ENCODE measurements at regions of chr2 and their contacts with region 1.

Region 1: GRCh38 chr2:138137949-138138348 is 173.7 kb downstream of the HNMT start:
- DNase-seq: peak; percentile 63
- ATAC-seq: peak; percentile 80
- H3K4me3 ChIP-seq: no peak overlapping the region
- H3K27ac ChIP-seq: no peak overlapping the region
- H3K4me1 ChIP-seq: peaks cover 19% of the 10 kb centered on the region
- H3K27me3 ChIP-seq: no peaks in the 10 kb centered on the region
- CTCF ChIP-seq: no peak
- EP300 ChIP-seq: peak in 1 of 2 experiments; percentile 60; a peak in 2 of 4 replicates
- POLR2A ChIP-seq: no peak
- RAD21 ChIP-seq: no peak

Region 2: GRCh38 chr2:138010890-138011289 is 127.1 kb before region 1 on chr2:
- CTCF ChIA-PET with region 1: no interaction called
- POLR2A ChIA-PET with region 1: no interaction called
- in situ Hi-C with region 1: no loop called
- intact Hi-C with region 1: no loop called
- DNase-seq: no peak
- ATAC-seq: no peak
- H3K4me3 ChIP-seq: no peak overlapping the region
- H3K27ac ChIP-seq: no peak overlapping the region
- H3K4me1 ChIP-seq: no peaks in the 10 kb centered on the region
- H3K27me3 ChIP-seq: no peaks in the 10 kb centered on the region
- CTCF ChIP-seq: no peak
- EP300 ChIP-seq: no peak
- POLR2A ChIP-seq: 0 out of 4 replicates have a peak, but pooled peaks of 1 of the 2 experiments have one; percentile 10
- RAD21 ChIP-seq: no peak

Region 3: DNA sequence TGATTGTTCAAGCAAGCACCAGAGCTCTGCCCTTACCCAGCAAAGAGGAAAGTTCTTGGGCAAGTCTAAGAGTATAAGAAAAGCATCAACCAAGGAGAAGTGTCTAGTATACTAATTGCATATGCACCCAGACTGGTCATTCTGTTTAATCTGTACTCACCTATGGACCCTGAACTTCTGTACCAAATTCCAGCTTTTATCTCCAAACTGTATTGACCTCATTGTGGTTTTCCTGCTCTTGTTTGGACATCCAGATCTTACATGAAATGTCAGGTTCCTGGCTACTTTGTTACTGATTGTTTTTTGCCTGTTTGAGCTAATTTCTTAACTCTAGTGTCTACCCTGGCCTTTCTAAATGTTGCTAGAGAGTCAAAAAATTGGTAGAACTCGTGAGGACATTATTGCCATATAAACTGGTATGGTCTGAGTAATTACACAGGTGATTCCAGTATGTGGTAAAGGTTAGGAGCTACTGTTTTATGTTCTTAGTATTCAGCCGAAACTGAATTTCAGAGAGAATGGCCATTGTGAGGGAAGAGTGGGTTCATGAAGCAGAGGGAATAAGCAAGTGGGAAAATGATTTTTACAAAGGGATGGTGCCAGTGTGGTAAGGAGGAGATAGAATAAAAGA is 27.4 kb before region 1 on chr2:
- CTCF ChIA-PET with region 1: no interaction called
- POLR2A ChIA-PET with region 1: no interaction called
- in situ Hi-C with region 1: no loop called
- intact Hi-C with region 1: loop called (anchors 2 kb)
- DNase-seq: peak; percentile 96
- ATAC-seq: peak; percentile 91
- H3K4me3 ChIP-seq: peak overlapping the region in 1 of 3 experiments; percentile 6; a peak in 1 of 6 replicates
- H3K27ac ChIP-seq: peak overlapping the region; percentile 72
- H3K4me1 ChIP-seq: peaks cover 62% of the 10 kb centered on the region
- H3K27me3 ChIP-seq: no peaks in the 10 kb centered on the region
- CTCF ChIP-seq: no peak
- EP300 ChIP-seq: peak; percentile 93 to 99
- POLR2A ChIP-seq: no peak
- RAD21 ChIP-seq: no peak

Region 4: DNA sequence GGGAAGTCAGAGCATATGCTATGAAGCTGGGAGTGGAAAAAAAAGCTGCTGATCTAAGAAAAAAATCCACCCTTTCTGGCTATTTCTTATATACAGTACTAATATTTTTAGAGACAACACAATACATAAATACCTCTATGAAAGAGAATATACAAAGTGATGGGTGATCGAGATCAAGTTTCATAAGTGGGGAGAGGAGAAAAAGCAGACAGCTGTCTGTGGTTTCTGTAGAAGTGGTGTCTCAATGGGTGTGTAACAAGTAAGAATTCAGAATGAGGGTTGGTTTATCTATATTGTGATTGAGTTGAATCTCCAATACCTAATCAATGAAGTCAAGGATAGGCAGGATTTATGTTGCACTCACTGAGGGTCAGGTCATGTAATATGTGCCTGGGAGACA is 17.4 kb after region 1 on chr2:
- CTCF ChIA-PET with region 1: no interaction called
- POLR2A ChIA-PET with region 1: no interaction called
- in situ Hi-C with region 1: no loop called
- intact Hi-C with region 1: no loop called
- DNase-seq: no peak
- ATAC-seq: no peak
- H3K4me3 ChIP-seq: no peak overlapping the region
- H3K27ac ChIP-seq: no peak overlapping the region
- H3K4me1 ChIP-seq: no peaks in the 10 kb centered on the region
- H3K27me3 ChIP-seq: no peaks in the 10 kb centered on the region
- CTCF ChIP-seq: no peak
- EP300 ChIP-seq: no peak
- POLR2A ChIP-seq: no peak
- RAD21 ChIP-seq: no peak

Region 5: GRCh38 chr2:138177640-138178039 is 39.7 kb after region 1 on chr2:
- CTCF ChIA-PET with region 1: no interaction called
- POLR2A ChIA-PET with region 1: no interaction called
- in situ Hi-C with region 1: no loop called
- intact Hi-C with region 1: no loop called
- DNase-seq: no peak
- ATAC-seq: no peak
- H3K4me3 ChIP-seq: no peak overlapping the region
- H3K27ac ChIP-seq: no peak overlapping the region
- H3K4me1 ChIP-seq: peaks cover 35% of the 10 kb centered on the region
- H3K27me3 ChIP-seq: no peaks in the 10 kb centered on the region
- CTCF ChIP-seq: no peak
- EP300 ChIP-seq: no peak
- POLR2A ChIP-seq: no peak
- RAD21 ChIP-seq: no peak

Measured in HepG2 (cell line).